ENCODE measurements at regions of chr2 and their contacts with region 1.

Region 1: GRCh38 chr2:70994756-70995729 is at the start of gene TEX261:
- DNase-seq: peak; percentile 92
- ATAC-seq: peak; percentile 97
- H3K4me3 ChIP-seq: peak within 1 kb of the TSS; percentile 81 to 93 (median 89)
- H3K4me3 Mint-ChIP-seq: peak within 1 kb of the TSS; percentile 96
- H3K27ac ChIP-seq: peak within 1 kb of the TSS; percentile 32 to 77
- H3K27ac Mint-ChIP-seq: peak within 1 kb of the TSS; percentile 92
- H3K4me1 ChIP-seq: peaks cover 21 to 23% of the 10 kb centered on the region in 2 donors
- H3K4me1 Mint-ChIP-seq: peaks cover 34% of the 10 kb centered on the region
- H3K27me3 ChIP-seq: no peaks in the 10 kb centered on the region
- H3K27me3 Mint-ChIP-seq: no peaks in the 10 kb centered on the region
- CTCF ChIP-seq: peak; percentile 59
- total RNA-seq, gene TEX261: 54.0 and 56.4 TPM in 2 replicates

Region 2: DNA sequence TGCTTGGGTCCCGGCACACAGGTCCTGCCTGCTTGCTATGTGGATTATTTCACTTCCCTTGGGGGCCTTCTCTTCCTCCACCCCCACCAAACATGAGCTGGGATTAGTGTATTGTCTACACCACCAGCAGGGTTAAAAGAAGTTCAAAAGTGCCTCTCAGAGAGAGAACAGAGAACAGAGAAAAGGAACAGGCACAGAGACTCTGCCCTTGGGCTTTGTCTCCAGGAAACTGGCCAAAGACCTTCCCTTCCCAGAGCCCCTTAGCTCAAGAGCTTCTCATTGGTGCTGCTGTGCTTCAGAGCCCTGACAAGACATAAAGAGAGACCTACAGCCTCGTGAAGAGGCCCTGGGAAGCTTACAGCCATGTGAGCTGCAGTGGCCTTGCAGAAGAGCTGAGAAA is 197.5 kb before region 1 on chr2:
- CTCF ChIA-PET with region 1: no interaction called
- POLR2A ChIA-PET with region 1: no interaction called
- intact Hi-C with region 1: no loop called
- DNase-seq: no peak
- ATAC-seq: no peak
- H3K4me3 ChIP-seq: no peak overlapping the region
- H3K4me3 Mint-ChIP-seq: no peak overlapping the region
- H3K27ac ChIP-seq: no peak overlapping the region
- H3K27ac Mint-ChIP-seq: no peak overlapping the region
- H3K4me1 ChIP-seq: no peaks in the 10 kb centered on the region
- H3K4me1 Mint-ChIP-seq: no peaks in the 10 kb centered on the region
- H3K27me3 ChIP-seq: peaks cover 0 to 29% (median 1%) of the 10 kb centered on the region in 4 experiments
- H3K27me3 Mint-ChIP-seq: peaks cover 42% of the 10 kb centered on the region
- CTCF ChIP-seq: no peak

Region 3: GRCh38 chr2:70977605-70978205 is 17.3 kb before region 1 on chr2:
- CTCF ChIA-PET with region 1: interaction called, 15 read pairs
- POLR2A ChIA-PET with region 1: no interaction called
- intact Hi-C with region 1: loop called (anchors 1 kb)
- DNase-seq: peak; percentile 57
- ATAC-seq: no peak
- H3K4me3 ChIP-seq: peak overlapping the region; percentile 52 to 84 (median 64)
- H3K4me3 Mint-ChIP-seq: peak overlapping the region; percentile 95
- H3K27ac ChIP-seq: peak overlapping the region; percentile 43 to 79
- H3K27ac Mint-ChIP-seq: peak overlapping the region; percentile 93
- H3K4me1 ChIP-seq: peaks cover 16 to 22% of the 10 kb centered on the region in 2 donors
- H3K4me1 Mint-ChIP-seq: peaks cover 22% of the 10 kb centered on the region
- H3K27me3 ChIP-seq: no peaks in the 10 kb centered on the region
- H3K27me3 Mint-ChIP-seq: peaks cover 15% of the 10 kb centered on the region
- CTCF ChIP-seq: no peak

Region 4: GRCh38 chr2:70984576-70985282 is 10.3 kb before region 1 on chr2:
- CTCF ChIA-PET with region 1: interaction called, 5 read pairs
- POLR2A ChIA-PET with region 1: no interaction called
- intact Hi-C with region 1: loop called (anchors 1 kb)
- DNase-seq: peak; percentile 82
- ATAC-seq: peak; percentile 93
- H3K4me3 ChIP-seq: peak overlapping the region in 2 of 5 experiments; percentile 13 to 17
- H3K4me3 Mint-ChIP-seq: peak overlapping the region; percentile 19
- H3K27ac ChIP-seq: no peak overlapping the region
- H3K27ac Mint-ChIP-seq: no peak overlapping the region
- H3K4me1 ChIP-seq: peaks cover 7 to 8% of the 10 kb centered on the region in 2 donors
- H3K4me1 Mint-ChIP-seq: peaks cover 10% of the 10 kb centered on the region
- H3K27me3 ChIP-seq: no peaks in the 10 kb centered on the region
- H3K27me3 Mint-ChIP-seq: no peaks in the 10 kb centered on the region
- CTCF ChIP-seq: peak; percentile 77

Region 5: GRCh38 chr2:71074893-71075395 is 79.9 kb after region 1 on chr2:
- CTCF ChIA-PET with region 1: no interaction called
- POLR2A ChIA-PET with region 1: no interaction called
- intact Hi-C with region 1: no loop called
- DNase-seq: no peak
- ATAC-seq: no peak
- H3K4me3 ChIP-seq: no peak overlapping the region
- H3K4me3 Mint-ChIP-seq: no peak overlapping the region
- H3K27ac ChIP-seq: peak overlapping the region in 1 of 2 donors; percentile 99
- H3K27ac Mint-ChIP-seq: no peak overlapping the region
- H3K4me1 ChIP-seq: peaks cover 37 to 40% of the 10 kb centered on the region in 2 donors
- H3K4me1 Mint-ChIP-seq: peaks cover 42% of the 10 kb centered on the region
- H3K27me3 ChIP-seq: no peaks in the 10 kb centered on the region
- H3K27me3 Mint-ChIP-seq: no peaks in the 10 kb centered on the region
- CTCF ChIP-seq: no peak

Region 6: GRCh38 chr2:71130113-71130904 is 135.3 kb after region 1 on chr2 and contains the starts of genes MCEE and MPHOSPH10:
- CTCF ChIA-PET with region 1: interaction called, 9 read pairs
- POLR2A ChIA-PET with region 1: no interaction called
- intact Hi-C with region 1: loop called (anchors 1 kb)
- DNase-seq: peak; percentile 92
- ATAC-seq: peak; percentile 93
- H3K4me3 ChIP-seq: peak within 1 kb of the TSS; percentile 82 to 97 (median 90)
- H3K4me3 Mint-ChIP-seq: no peak within 1 kb of the TSS
- H3K27ac ChIP-seq: peak within 1 kb of the TSS; percentile 73 to 81
- H3K27ac Mint-ChIP-seq: no peak within 1 kb of the TSS
- H3K4me1 ChIP-seq: peaks cover 20 to 25% of the 10 kb centered on the region in 2 donors
- H3K4me1 Mint-ChIP-seq: peaks cover 19% of the 10 kb centered on the region
- H3K27me3 ChIP-seq: no peaks in the 10 kb centered on the region
- H3K27me3 Mint-ChIP-seq: no peaks in the 10 kb centered on the region
- CTCF ChIP-seq: no peak
- total RNA-seq, gene MCEE: 17.6 and 21.7 TPM in 2 replicates
- total RNA-seq, gene MPHOSPH10: 45.8 and 51.8 TPM in 2 replicates

Measured in B cell (primary cell).